ENCODE measurements at regions of chr10 and their contacts with region 1.

Region 1: DNA sequence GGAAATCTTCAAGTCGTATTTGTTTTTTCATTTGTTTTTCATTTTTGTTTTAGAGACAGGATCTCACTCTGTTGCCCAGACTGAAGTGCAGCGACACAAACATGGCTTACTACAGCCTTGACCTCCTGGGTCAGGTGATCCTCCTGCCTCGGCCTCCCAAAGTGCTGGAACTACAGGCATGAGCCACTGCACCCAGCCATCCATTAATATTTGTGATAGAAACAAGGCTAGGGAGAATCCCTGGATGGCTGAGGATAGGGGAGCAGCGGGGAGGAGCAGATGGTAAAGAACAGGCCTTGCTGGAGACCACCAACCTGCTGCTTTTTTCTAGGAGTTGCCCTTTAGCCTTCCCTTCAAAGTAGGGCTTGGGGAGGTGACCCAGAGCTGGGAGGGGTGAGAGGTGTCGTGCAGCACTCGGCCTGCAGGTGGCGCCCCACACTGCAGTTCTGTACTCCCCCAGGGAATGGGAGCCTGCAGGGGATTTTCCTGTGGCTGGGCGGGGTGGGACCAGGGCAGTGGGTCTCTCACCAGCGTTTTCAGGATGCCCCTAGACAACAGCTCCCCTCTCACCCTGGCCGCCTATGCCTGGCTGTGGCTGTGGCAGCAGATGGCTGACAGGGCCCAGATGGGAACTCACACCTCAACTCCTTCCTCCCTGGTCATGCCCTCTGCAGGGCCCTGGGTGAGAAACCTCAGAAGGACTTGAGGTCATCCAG is 12.6 kb upstream of the CDH23 start:
- H3K4me3 ChIP-seq: no peak overlapping the region
- H3K27ac ChIP-seq: no peak overlapping the region
- H3K4me1 ChIP-seq: no peaks in the 10 kb centered on the region
- CTCF ChIP-seq: peak; percentile 83

Region 2: DNA sequence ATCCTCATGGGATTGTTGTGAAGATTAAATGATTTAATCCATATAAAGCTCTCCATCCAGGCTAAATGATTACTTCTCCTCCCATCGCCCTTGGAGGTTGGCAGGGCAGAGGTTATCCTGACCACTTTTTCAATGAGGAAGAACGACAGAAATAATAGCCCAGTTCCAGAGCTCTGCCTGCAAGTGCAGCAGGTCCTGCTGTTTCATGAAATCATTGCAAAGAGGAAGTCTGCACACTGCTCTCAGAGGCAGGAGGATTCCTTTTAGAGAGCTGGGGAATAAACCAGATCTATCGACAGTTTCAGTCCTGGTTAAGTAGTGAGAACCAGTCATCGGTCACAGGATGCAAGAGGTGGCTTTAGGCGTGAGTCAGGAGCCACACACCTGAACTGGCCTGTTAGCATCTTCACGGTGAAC is 12.4 kb before region 1 on chr10:
- CTCF ChIA-PET with region 1: interaction called, 11 read pairs
- POLR2A ChIA-PET with region 1: no interaction called
- H3K4me3 ChIP-seq: no peak overlapping the region
- H3K27ac ChIP-seq: no peak overlapping the region
- H3K4me1 ChIP-seq: no peaks in the 10 kb centered on the region
- CTCF ChIP-seq: no peak

Region 3: DNA sequence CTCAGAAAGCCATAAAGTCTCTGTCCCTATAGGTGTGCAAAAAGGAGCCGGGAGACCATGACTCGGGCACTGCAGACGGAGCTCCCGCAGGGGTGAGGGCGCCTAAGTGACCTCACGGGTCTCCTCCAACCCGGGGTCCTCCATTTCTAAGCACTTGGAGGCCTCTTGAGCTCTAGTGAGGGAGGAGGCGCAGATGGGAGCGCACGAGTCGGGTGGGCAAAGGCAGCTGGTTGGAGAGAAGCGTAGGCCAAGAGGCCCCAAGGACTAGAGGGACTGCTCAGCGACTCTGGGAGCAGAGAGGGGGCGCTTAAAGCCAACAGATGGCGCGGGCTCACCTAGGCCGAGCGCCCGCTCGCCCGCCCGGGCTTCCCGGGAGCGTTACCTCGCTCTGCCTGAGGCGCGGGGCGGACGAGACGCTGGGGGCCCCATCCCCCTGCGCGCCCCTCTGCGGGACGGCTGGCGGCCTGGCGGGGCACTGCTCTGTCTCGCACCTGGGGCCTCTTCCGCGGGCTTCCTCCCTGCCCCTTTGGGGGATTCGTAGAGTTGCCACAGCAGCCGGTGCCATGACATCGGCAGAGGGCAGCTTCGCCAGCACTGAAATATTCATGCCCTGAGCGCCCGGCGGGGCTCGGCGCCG is 12.1 kb after region 1 on chr10:
- CTCF ChIA-PET with region 1: interaction called, 12 read pairs
- POLR2A ChIA-PET with region 1: no interaction called
- H3K4me3 ChIP-seq: no peak overlapping the region
- H3K27ac ChIP-seq: no peak overlapping the region; the same call in 1 of the 2 replicates
- H3K4me1 ChIP-seq: peaks cover 4% of the 10 kb centered on the region; the same call in 1 of the 2 replicates
- CTCF ChIP-seq: peak; percentile 87

Region 4: DNA sequence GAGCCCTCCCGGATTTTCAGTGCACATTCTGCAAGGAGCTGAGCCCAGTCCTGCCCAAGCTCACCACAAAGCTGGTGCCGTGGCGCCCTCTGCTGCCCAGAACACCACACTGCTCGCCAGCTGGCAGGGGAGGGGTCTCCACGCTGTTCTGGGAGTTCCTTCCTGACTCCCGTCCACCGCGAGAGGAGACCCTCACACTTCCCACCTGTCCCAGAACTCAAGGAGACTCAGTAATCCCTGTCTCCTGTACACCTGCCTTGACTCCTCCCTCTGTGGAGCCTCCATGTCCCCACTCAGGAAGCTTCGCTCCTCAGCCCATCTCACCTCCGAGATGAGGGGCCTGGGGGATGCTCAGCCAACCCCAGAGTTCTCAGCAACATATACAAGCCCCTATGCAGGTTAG is 324.2 kb after region 1 on chr10:
- CTCF ChIA-PET with region 1: interaction called, 24 read pairs
- POLR2A ChIA-PET with region 1: no interaction called
- H3K4me3 ChIP-seq: no peak overlapping the region
- H3K27ac ChIP-seq: no peak overlapping the region
- H3K4me1 ChIP-seq: no peaks in the 10 kb centered on the region
- CTCF ChIP-seq: peak; percentile 78

Measured in HEK293 (cell line).